Left colon (tissue), 2 donors: ENCODE measurements at regions of chr6 and their contacts with region 1.

Region 1: GRCh38 chr6:126804332-126805064 is 314.0 kb upstream of the RSPO3 start:
- DNase-seq: peak in 1 of 2 donors; percentile 3
- ATAC-seq: no peak

Region 2: DNA sequence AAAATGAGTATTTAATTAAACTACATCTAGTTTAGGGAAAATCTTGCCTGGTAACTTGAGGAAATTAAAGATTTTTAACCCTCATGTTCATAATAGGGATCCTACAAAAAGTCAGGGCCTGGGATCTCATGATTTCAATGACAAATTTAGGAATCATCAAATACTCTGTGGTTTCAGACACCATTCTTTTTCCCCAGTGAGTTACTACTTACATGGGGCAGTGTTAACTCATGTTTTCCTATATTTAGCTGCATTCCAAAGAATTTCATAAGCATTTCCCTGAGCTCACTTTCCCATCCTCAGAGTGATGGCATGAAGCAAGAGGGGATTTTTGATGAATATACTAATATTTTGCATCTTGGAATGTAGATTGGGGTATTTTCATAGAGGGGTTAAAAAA is 142.9 kb before region 1 on chr6:
- intact Hi-C with region 1: no loop called
- DNase-seq: no peak
- ATAC-seq: no peak

Region 3: DNA sequence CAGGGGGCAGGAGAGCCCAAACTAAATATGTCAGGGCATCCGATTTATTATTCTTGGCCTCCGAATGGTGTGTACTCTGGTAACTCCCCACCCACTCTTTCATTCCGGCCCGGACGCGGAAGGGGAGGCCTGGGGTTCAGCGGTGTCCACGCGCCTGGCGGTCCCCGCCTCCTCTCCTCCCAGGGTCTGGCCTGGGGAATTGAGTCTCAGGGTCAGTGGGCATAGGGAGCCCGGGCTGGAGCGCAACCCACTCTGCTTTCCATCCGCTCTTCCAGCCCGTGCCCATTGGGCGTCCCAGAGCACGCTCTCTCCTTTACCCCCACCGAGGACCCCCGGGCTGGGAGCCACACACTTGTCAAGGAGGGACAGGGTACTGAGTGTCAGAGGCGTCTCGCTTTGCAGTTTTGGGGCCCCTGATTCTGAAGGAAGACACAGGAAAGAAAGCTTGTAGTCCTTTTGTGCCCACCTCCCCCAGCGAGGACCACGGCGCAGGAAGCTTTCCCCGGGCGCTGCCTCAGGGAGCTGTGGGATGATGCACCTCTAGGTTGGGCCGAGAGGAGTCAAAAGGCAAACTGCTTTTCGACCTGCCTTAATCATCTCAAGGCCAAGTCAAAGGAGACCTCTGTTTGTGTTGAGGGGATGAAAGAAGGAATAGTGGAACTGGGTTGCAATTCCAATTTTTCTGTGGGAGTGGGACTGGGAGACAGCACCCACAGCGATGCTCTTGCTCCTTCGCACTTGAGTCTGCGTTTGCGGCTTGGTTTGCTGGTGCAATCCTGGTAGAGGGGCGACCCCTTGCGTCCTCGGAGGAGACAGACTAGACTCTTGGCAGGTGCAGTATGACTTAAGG is 316.5 kb after region 1 on chr6:
- intact Hi-C with region 1: loop called in 1 of 2 experiments (anchors 10 kb)
- DNase-seq: peak; percentile 62 to 67
- ATAC-seq: peak; percentile 75

Region 4: GRCh38 chr6:127255286-127255685 is 450.8 kb after region 1 on chr6:
- intact Hi-C with region 1: no loop called
- DNase-seq: no peak
- ATAC-seq: no peak